ENCODE measurements at regions of chr11 and their contacts with region 1.

Region 1: DNA sequence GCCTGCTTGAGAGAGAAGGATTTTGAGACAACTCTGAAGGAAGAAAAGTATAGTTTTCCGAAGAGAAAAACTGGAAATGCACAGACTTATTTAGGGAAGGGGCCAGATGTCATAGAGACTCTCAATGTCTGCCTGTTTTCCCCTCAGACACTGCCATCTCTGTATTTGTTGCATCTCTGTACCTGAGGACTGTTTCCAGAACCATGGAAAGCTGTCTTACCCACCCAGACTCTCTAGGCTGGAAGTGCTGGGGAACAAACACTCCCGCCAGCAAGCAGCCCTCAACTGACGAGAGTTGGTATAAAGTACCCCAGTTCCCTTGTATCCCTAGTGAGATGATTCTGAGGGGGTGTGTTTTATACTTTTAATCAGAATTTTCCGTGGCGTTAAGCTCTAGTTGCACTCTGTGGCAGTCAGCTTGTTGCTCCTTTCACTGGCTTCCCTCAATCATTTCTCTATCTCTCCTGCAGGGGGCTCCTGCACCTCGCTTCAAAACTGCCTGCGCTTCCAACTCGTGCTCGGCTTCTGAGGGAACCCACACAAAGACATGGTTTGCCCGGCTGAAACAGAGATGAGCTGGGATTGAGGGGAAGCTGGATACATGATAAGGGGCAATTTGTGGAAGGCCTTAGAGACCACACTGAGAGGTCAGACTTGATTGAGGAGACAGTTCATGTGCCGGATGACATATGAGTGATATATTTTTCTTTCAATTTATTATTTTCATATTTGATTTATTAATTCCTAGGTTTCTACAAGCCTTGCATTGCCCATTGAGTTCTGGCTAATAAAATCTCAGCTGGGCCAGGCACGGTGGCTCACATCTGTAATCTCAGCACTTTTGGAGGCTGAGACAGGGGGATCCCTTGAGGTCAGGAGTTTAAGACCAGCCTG is 36.9 kb upstream of the CLPB start:
- DNase-seq: peak; percentile 62
- ATAC-seq: peak; percentile 86 to 91

Region 2: GRCh38 chr11:72439455-72439854 is 31.8 kb before region 1 on chr11:
- intact Hi-C with region 1: no loop called
- DNase-seq: no peak
- ATAC-seq: peak in 1 of 2 donors; percentile 41

Region 3: GRCh38 chr11:72573072-72573854 is 102.0 kb after region 1 on chr11:
- intact Hi-C with region 1: loop called in 1 of 2 experiments (anchors 10 kb)
- DNase-seq: no peak
- ATAC-seq: peak; percentile 69 to 79

Region 4: DNA sequence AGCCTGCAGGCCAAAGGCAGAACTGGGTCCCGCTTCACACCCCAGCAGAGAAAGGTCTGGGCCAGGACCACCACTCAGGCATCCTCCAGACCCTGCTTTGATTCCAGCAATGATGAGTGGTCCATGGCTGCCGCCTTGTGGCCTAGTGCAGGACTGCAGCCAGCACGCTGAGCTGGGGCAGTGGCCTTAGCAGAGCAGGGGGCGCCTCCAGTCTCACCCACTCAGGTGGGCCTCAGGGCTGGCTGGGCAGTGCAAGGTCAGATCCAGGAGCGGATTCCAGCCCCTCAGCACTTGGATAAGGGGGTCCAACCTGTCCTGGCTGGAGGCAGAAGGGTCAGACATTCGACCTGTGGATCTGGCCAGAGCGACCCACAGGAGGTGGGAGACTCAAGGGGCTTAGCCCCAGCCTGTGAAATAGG is 212.5 kb after region 1 on chr11:
- intact Hi-C with region 1: loop called in 1 of 2 experiments (anchors 10 kb)
- DNase-seq: peak; percentile 63
- ATAC-seq: peak; percentile 42 to 47